ENCODE measurements at regions of chr4 and their contacts with region 1.

Region 1: DNA sequence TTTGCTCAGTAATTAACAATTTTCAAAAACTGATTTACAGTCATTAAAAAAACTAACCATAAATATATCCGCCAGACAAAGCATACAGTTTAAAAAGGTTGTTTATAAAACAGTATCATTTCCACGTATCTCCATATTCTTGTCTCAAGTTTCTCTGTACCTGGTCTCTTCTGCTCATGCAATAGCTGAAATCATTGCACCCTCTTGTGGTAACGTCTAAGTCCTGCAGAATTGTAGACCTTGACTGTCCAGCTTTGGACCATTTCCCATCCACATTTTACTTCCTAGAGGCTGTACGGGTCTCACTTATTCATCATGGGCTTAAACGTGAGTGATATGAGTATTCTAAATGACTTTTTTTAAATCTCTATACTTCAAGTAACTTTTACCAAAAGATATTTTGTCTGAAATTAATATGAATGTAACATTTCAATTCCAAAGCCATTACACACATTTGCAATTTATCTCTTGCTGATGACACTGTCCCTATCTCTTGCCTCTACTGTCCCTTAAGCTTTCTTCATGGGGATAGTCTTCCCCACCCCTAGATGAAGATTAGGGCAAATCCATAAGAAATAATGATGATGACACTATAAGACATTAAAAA is 118.5 kb downstream of the BTC start:
- DNase-seq: no peak
- H3K4me3 ChIP-seq: no peak overlapping the region
- H3K27ac ChIP-seq: no peak overlapping the region
- H3K4me1 ChIP-seq: no peaks in the 10 kb centered on the region
- H3K27me3 ChIP-seq: no peaks in the 10 kb centered on the region
- CTCF ChIP-seq: peak in 2 of 3 experiments; percentile 70 to 78; a peak in 3 of 4 replicates
- EP300 ChIP-seq: no peak
- POLR2A ChIP-seq: no peak
- RAD21 ChIP-seq: peak; percentile 89

Region 2: GRCh38 chr4:74228691-74229640 is 446.8 kb before region 1 on chr4:
- CTCF ChIA-PET with region 1: interaction called, 11 read pairs
- POLR2A ChIA-PET with region 1: no interaction called
- DNase-seq: peak; percentile 49 to 89
- H3K4me3 ChIP-seq: no peak overlapping the region
- H3K27ac ChIP-seq: no peak overlapping the region
- H3K4me1 ChIP-seq: no peaks in the 10 kb centered on the region
- H3K27me3 ChIP-seq: no peaks in the 10 kb centered on the region
- CTCF ChIP-seq: peak; percentile 82 to 90 (median 84)
- EP300 ChIP-seq: no peak
- POLR2A ChIP-seq: no peak
- RAD21 ChIP-seq: peak; percentile 73 to 74

Region 3: DNA sequence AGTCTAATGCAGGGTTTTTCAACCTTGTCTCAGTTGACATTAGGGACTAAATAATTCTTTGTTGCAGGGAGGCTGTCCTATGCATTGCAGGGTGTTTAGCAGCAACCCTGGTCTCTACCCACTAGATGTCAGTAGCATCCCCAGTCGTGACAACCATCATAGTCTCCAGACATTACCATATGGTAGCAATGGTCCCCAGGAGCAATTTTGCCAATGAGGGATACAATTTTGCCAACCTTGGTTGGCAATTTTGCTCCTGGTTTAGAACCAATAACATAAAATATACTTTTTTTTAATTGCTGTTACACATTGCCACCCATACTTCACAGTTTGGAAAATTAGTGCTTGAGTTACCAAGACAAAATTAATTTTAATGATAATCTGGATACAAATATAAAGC is 304.9 kb before region 1 on chr4:
- CTCF ChIA-PET with region 1: interaction called, 73 read pairs
- POLR2A ChIA-PET with region 1: no interaction called
- DNase-seq: no peak
- H3K4me3 ChIP-seq: no peak overlapping the region
- H3K27ac ChIP-seq: no peak overlapping the region
- H3K4me1 ChIP-seq: no peaks in the 10 kb centered on the region
- H3K27me3 ChIP-seq: peaks cover 0 to 1% (median 0%) of the 10 kb centered on the region in 4 experiments; a peak in 2 of 7 replicates
- CTCF ChIP-seq: peak; percentile 63 to 86 (median 81)
- EP300 ChIP-seq: no peak
- POLR2A ChIP-seq: no peak
- RAD21 ChIP-seq: peak; percentile 81 to 85

Region 4: GRCh38 chr4:74435296-74435695 is 240.5 kb before region 1 on chr4:
- CTCF ChIA-PET with region 1: no interaction called
- POLR2A ChIA-PET with region 1: no interaction called
- DNase-seq: no peak
- H3K4me3 ChIP-seq: no peak overlapping the region
- H3K27ac ChIP-seq: no peak overlapping the region
- H3K4me1 ChIP-seq: no peaks in the 10 kb centered on the region
- H3K27me3 ChIP-seq: no peaks in the 10 kb centered on the region
- CTCF ChIP-seq: no peak
- EP300 ChIP-seq: no peak
- POLR2A ChIP-seq: no peak
- RAD21 ChIP-seq: no peak

Region 5: DNA sequence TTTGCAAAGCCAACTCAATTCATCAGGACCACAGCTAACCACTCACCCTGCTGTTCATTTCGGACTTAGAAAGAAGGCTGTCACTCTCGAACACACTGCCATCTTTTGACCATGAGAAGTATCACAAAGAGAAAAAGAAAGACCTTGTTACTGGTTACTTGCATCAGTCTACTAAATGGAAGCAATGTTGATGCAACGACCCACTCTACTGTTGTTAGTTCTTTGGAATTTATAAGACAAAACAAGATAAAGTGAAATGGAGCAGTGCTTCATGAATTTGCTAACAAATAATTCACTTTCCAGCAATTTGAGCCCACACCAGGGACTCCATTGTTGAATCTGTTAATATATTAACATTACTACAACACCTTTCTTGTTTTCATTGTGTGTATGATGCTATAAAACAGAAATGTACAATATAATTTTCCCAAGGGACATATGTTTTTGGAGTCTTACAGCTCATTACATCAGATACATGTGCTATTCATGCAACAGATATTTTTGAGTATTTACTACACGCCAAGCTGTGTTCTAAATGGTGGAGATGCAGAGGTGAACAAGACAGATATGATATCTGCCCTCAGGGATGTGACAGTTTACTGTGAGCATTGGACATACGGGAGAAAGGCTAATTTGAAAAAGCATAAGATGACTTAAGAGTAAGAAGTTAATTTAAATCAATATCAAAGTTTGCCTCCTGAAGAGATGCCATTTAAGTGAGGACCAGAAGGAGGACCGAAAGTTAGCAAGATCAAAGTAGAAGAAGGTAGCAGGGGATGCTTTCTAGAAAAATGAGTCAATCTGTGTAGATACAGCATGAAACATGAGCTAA is 143.6 kb before region 1 on chr4:
- CTCF ChIA-PET with region 1: interaction called, 15 read pairs
- POLR2A ChIA-PET with region 1: no interaction called
- DNase-seq: peak in 1 of 2 experiments; percentile 13
- H3K4me3 ChIP-seq: no peak overlapping the region
- H3K27ac ChIP-seq: no peak overlapping the region
- H3K4me1 ChIP-seq: no peaks in the 10 kb centered on the region
- H3K27me3 ChIP-seq: no peaks in the 10 kb centered on the region
- CTCF ChIP-seq: peak in 2 of 3 experiments; percentile 70 to 86; a peak in 3 of 4 replicates
- EP300 ChIP-seq: no peak
- POLR2A ChIP-seq: no peak
- RAD21 ChIP-seq: peak; percentile 69 to 76

Region 6: DNA sequence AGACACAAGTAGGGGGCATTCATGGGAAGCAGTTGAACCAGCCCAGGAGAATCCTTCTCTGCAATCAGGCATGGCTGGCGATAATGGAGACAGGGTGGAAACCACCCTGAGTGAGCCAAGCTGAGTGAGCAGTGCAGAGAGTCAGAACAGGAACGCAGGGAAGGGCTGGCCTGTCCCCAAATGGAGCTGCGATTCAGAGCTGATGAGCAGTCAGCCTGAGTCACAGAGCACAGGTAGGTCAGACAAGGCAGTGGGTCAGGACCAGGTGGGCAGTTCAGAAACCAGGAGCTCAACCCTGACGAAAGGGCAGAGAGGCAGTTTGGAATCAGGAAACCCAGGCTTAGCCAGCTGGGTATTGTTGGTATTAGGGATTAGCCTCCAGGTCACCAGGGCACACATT is 10.4 kb before region 1 on chr4:
- CTCF ChIA-PET with region 1: interaction called, 19 read pairs
- POLR2A ChIA-PET with region 1: no interaction called
- DNase-seq: no peak
- H3K4me3 ChIP-seq: no peak overlapping the region
- H3K27ac ChIP-seq: no peak overlapping the region
- H3K4me1 ChIP-seq: peaks cover 0 to 16% (median 1%) of the 10 kb centered on the region in 4 experiments; a peak in 2 of 7 replicates
- H3K27me3 ChIP-seq: no peaks in the 10 kb centered on the region
- CTCF ChIP-seq: no peak
- EP300 ChIP-seq: no peak
- POLR2A ChIP-seq: no peak
- RAD21 ChIP-seq: no peak

Region 7: GRCh38 chr4:74855879-74856278 is 180.1 kb after region 1 on chr4:
- CTCF ChIA-PET with region 1: no interaction called
- POLR2A ChIA-PET with region 1: no interaction called
- DNase-seq: no peak
- H3K4me3 ChIP-seq: no peak overlapping the region
- H3K27ac ChIP-seq: no peak overlapping the region
- H3K4me1 ChIP-seq: no peaks in the 10 kb centered on the region
- H3K27me3 ChIP-seq: peaks cover 0 to 1% (median 0%) of the 10 kb centered on the region in 4 experiments; a peak in 1 of 7 replicates
- CTCF ChIP-seq: no peak
- EP300 ChIP-seq: no peak
- POLR2A ChIP-seq: no peak
- RAD21 ChIP-seq: no peak